ENCODE measurements at regions of chr12 and their contacts with region 1.

Region 1: GRCh38 chr12:64759035-64759901 is at the start of gene GNS:
- DNase-seq: peak; percentile 81 to 95 (median 90)
- ATAC-seq: peak; percentile 87
- H3K4me3 ChIP-seq: peak within 1 kb of the TSS; percentile 62
- H3K4me3 Mint-ChIP-seq: peak within 1 kb of the TSS; percentile 99
- H3K27ac ChIP-seq: peak within 1 kb of the TSS; percentile 52 to 54
- H3K27ac Mint-ChIP-seq: peak within 1 kb of the TSS; percentile 85
- H3K4me1 ChIP-seq: peaks cover 23% of the 10 kb centered on the region
- H3K4me1 Mint-ChIP-seq: peaks cover 54% of the 10 kb centered on the region
- H3K27me3 ChIP-seq: no peaks in the 10 kb centered on the region
- H3K27me3 Mint-ChIP-seq: no peaks in the 10 kb centered on the region
- CTCF ChIP-seq: no peak
- total RNA-seq, gene GNS: 8.7 to 10.0 TPM

Region 2: GRCh38 chr12:64222009-64222765 is 537.1 kb before region 1 on chr12 and contains the start of gene KICS2:
- CTCF ChIA-PET with region 1: no interaction called
- POLR2A ChIA-PET with region 1: no interaction called
- intact Hi-C with region 1: loop called in 1 of 2 experiments (anchors 2 kb)
- DNase-seq: peak; percentile 79 to 97 (median 88)
- ATAC-seq: peak; percentile 85
- H3K4me3 ChIP-seq: peak within 1 kb of the TSS; percentile 78
- H3K4me3 Mint-ChIP-seq: peak within 1 kb of the TSS; percentile 97
- H3K27ac ChIP-seq: peak within 1 kb of the TSS; percentile 84 to 98
- H3K27ac Mint-ChIP-seq: peak within 1 kb of the TSS; percentile 95
- H3K4me1 ChIP-seq: peaks cover 13% of the 10 kb centered on the region
- H3K4me1 Mint-ChIP-seq: peaks cover 41% of the 10 kb centered on the region
- H3K27me3 ChIP-seq: no peaks in the 10 kb centered on the region
- H3K27me3 Mint-ChIP-seq: peaks cover 12% of the 10 kb centered on the region
- CTCF ChIP-seq: no peak
- total RNA-seq, gene KICS2: 13.6 to 14.0 TPM

Region 3: GRCh38 chr12:64459394-64459891 is 299.8 kb before region 1 on chr12:
- CTCF ChIA-PET with region 1: no interaction called
- POLR2A ChIA-PET with region 1: no interaction called
- intact Hi-C with region 1: loop called in 1 of 2 experiments (anchors 5 kb)
- DNase-seq: peak in 3 of 14 experiments; percentile 43 to 55 (median 54)
- ATAC-seq: peak; percentile 51
- H3K4me3 ChIP-seq: peak overlapping the region; percentile 59
- H3K4me3 Mint-ChIP-seq: peak overlapping the region; percentile 90
- H3K27ac ChIP-seq: peak overlapping the region; percentile 54 to 77
- H3K27ac Mint-ChIP-seq: peak overlapping the region; percentile 91
- H3K4me1 ChIP-seq: peaks cover 22% of the 10 kb centered on the region
- H3K4me1 Mint-ChIP-seq: peaks cover 44% of the 10 kb centered on the region
- H3K27me3 ChIP-seq: no peaks in the 10 kb centered on the region
- H3K27me3 Mint-ChIP-seq: no peaks in the 10 kb centered on the region
- CTCF ChIP-seq: no peak

Region 4: GRCh38 chr12:64912516-64913255 is 153.4 kb after region 1 on chr12:
- CTCF ChIA-PET with region 1: no interaction called
- POLR2A ChIA-PET with region 1: no interaction called
- intact Hi-C with region 1: no loop called
- DNase-seq: no peak
- ATAC-seq: no peak
- H3K4me3 ChIP-seq: no peak overlapping the region
- H3K4me3 Mint-ChIP-seq: no peak overlapping the region
- H3K27ac ChIP-seq: no peak overlapping the region
- H3K27ac Mint-ChIP-seq: no peak overlapping the region
- H3K4me1 ChIP-seq: no peaks in the 10 kb centered on the region
- H3K4me1 Mint-ChIP-seq: no peaks in the 10 kb centered on the region
- H3K27me3 ChIP-seq: peaks cover 0 to 7% of the 10 kb centered on the region in 2 experiments
- H3K27me3 Mint-ChIP-seq: peaks cover 30% of the 10 kb centered on the region
- CTCF ChIP-seq: no peak

Region 5: DNA sequence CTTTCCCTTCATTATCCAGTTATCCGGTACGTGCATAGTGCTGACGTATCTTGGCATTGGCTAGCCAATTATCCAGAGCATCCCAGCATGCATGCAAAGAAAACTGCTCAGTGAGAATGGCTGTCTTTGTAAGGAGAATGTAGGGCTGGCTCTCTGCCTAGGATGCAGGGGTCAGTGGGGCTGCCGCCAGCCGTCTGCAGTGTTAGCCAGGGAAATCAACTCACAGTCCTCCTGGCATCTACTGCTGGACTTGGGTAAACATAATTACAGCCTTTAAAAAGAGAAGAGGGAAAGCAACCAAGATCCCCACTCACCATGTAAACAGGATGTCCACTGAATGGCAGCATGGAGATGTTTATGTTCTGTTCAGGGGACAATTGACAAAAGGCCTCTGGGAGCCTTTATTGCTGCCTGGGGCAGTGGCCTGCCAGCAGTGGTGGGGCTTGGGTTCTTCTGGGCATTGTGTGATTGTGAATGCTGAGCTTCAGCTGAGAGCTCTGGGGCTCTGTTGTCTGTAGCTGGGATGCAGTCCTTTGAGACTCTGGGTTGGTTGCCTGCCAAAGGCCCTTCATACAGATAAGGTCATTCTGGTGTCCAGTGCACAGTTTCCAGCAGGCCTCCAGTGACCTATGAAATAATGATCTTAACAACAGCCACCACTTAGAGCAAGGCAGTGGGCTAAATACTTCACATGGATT is 187.0 kb after region 1 on chr12:
- CTCF ChIA-PET with region 1: no interaction called
- POLR2A ChIA-PET with region 1: no interaction called
- intact Hi-C with region 1: no loop called
- DNase-seq: no peak
- ATAC-seq: no peak
- H3K4me3 ChIP-seq: no peak overlapping the region
- H3K4me3 Mint-ChIP-seq: no peak overlapping the region
- H3K27ac ChIP-seq: no peak overlapping the region
- H3K27ac Mint-ChIP-seq: no peak overlapping the region
- H3K4me1 ChIP-seq: no peaks in the 10 kb centered on the region
- H3K4me1 Mint-ChIP-seq: no peaks in the 10 kb centered on the region
- H3K27me3 ChIP-seq: peaks cover 6 to 16% of the 10 kb centered on the region in 2 experiments
- H3K27me3 Mint-ChIP-seq: peaks cover 38% of the 10 kb centered on the region
- CTCF ChIP-seq: no peak

Region 6: DNA sequence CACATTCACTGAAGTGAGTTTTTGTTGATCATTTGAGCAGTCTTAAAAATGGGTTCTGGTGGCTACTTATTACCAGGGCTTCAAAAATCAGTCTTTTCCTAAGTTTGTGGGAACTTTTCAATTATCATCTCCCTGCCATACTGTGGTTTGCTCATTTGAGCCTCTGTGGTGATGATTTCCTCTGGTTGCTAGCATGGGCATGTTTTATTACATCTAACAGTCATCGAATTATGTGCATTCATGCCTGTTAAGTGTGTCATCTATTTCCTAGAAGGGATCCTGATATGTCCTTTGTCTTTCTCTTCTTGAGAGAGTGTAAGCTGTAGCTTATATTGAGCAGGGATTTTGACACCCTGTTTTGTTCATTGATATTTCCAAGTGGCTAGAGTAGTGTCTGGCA is 245.0 kb after region 1 on chr12:
- CTCF ChIA-PET with region 1: no interaction called
- POLR2A ChIA-PET with region 1: no interaction called
- intact Hi-C with region 1: no loop called
- DNase-seq: no peak
- ATAC-seq: no peak
- H3K4me3 ChIP-seq: no peak overlapping the region
- H3K4me3 Mint-ChIP-seq: no peak overlapping the region
- H3K27ac ChIP-seq: no peak overlapping the region
- H3K27ac Mint-ChIP-seq: no peak overlapping the region
- H3K4me1 ChIP-seq: no peaks in the 10 kb centered on the region
- H3K4me1 Mint-ChIP-seq: no peaks in the 10 kb centered on the region
- H3K27me3 ChIP-seq: no peaks in the 10 kb centered on the region
- H3K27me3 Mint-ChIP-seq: peaks cover 29% of the 10 kb centered on the region
- CTCF ChIP-seq: no peak